B cell (primary cell): ENCODE measurements at regions of chr18 and their contacts with region 1.

Region 1: DNA sequence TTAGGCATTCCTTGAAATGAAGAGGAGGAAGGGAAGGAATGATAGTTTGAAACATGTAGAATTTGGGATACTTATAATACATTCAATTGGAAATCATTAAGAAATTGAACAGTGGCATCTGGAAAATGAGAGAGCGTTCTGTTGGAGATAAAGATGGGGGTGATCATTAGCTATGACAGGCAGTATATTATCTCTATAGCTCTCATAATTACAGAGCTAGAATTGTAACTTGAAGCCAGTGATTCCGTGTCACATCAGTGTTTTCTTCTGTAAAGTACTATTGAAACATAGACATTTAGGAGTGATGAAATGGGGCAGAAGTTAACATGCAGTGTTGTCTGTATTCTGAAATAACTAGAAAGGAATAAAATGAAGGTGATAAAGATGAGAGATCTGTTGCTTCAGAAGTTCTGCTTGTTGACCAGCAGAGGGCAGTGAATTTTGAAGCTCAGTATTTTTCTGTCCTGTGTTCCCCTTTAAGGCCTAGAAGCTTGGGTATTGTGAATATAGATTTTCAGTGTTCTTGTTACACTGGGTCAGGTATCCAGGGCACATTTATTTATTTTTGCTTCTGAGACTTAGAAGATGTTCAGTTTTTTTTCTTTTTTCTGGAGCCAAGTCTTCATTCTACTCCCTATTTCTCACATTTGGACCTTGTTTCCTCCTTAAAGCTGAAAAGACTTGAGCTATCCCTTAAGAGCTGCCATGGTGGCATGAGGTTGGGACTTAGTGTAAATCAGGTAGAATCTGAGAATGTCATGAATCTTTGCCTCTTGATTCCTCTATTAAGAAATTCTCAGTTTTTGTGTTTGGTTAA is 157.4 kb downstream of the TAF4B start:
- DNase-seq: peak; percentile 50
- ATAC-seq: no peak
- H3K4me3 ChIP-seq: no peak overlapping the region
- H3K4me3 Mint-ChIP-seq: no peak overlapping the region
- H3K27ac ChIP-seq: no peak overlapping the region
- H3K27ac Mint-ChIP-seq: no peak overlapping the region
- H3K4me1 ChIP-seq: no peaks in the 10 kb centered on the region
- H3K4me1 Mint-ChIP-seq: no peaks in the 10 kb centered on the region
- H3K27me3 ChIP-seq: no peaks in the 10 kb centered on the region
- H3K27me3 Mint-ChIP-seq: no peaks in the 10 kb centered on the region
- CTCF ChIP-seq: peak; percentile 88

Region 2: GRCh38 chr18:26185267-26185666 is 198.4 kb before region 1 on chr18:
- CTCF ChIA-PET with region 1: no interaction called
- POLR2A ChIA-PET with region 1: no interaction called
- intact Hi-C with region 1: no loop called
- DNase-seq: no peak
- ATAC-seq: no peak
- H3K4me3 ChIP-seq: no peak overlapping the region
- H3K4me3 Mint-ChIP-seq: no peak overlapping the region
- H3K27ac ChIP-seq: no peak overlapping the region
- H3K27ac Mint-ChIP-seq: no peak overlapping the region
- H3K4me1 ChIP-seq: peaks cover 12 to 18% of the 10 kb centered on the region in 2 donors
- H3K4me1 Mint-ChIP-seq: peaks cover 30% of the 10 kb centered on the region
- H3K27me3 ChIP-seq: no peaks in the 10 kb centered on the region
- H3K27me3 Mint-ChIP-seq: no peaks in the 10 kb centered on the region
- CTCF ChIP-seq: peak; percentile 29

Region 3: DNA sequence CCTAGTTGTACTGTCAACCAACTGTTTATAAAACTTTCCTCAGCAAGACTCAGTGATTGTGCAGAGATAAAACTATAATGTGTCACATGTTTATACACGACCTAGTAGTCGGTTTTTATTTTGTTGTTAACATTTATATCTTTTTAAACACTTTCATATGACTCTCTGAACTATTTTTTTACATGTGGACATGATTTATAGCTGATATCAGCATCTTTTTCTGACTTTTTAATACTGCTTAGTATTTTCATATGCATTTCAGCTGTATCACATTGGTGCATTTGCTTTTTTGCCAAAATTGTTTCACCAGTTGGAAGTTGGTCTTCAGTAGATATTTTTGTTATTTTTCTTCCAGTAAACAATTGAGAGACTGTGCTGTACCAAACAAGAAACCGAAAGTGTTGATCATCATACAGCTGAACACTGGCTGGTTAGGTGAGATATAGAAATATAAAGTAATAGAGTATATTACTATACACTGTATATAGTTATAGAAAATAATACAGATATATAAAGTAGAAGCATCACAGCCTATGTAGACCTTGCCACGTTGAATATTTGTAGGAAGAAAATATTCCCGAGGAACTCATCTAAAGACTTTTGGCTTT is 10.5 kb after region 1 on chr18:
- CTCF ChIA-PET with region 1: interaction called, 16 read pairs
- POLR2A ChIA-PET with region 1: no interaction called
- intact Hi-C with region 1: no loop called
- DNase-seq: no peak
- ATAC-seq: no peak
- H3K4me3 ChIP-seq: no peak overlapping the region
- H3K4me3 Mint-ChIP-seq: no peak overlapping the region
- H3K27ac ChIP-seq: no peak overlapping the region
- H3K27ac Mint-ChIP-seq: no peak overlapping the region
- H3K4me1 ChIP-seq: no peaks in the 10 kb centered on the region
- H3K4me1 Mint-ChIP-seq: no peaks in the 10 kb centered on the region
- H3K27me3 ChIP-seq: no peaks in the 10 kb centered on the region
- H3K27me3 Mint-ChIP-seq: no peaks in the 10 kb centered on the region
- CTCF ChIP-seq: no peak

Region 4: DNA sequence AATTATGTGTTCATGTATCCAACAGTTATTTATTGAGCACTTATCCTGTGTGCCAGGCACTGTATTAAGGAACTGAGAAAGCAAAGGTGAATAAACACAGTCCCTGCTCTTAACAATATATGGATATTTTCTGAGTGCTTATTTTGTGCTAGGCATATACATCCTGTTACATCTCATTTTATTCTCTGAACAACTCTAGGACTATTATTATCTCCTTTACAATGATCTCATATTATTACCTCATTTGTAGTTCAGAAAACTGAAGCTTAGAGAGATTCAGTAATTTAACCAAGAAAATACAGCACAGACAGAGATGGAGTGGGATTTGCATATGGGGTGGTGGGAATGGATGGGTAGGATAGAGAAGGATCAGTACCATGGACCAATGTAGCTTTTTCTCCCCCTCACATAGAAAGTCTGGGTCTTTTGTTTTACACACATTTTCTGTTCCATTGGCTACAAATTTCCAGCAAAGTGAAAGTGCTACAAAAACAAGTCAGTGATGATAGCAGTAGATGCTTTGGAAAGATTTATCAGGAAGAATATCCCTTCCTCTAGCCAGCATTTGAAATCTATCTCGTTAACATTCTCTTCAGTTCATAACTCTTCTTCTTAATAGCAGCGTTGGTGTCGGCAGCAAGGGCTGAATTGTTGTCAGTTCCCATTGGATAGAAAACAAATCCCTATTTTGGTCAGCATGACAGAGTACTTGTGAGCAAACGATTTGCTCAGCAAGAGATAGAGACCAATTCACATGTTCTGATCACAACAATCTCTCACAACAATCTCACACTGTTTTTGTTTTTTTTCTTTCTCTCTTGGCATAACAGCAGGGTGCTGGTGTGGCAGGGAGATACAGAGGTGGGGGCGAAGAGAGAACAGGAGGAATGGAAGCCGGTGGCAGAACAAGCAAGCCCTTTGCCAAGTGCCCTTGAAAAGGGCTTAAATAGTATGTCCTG is 266.9 kb after region 1 on chr18:
- CTCF ChIA-PET with region 1: interaction called, 15 read pairs
- POLR2A ChIA-PET with region 1: no interaction called
- intact Hi-C with region 1: no loop called
- DNase-seq: no peak
- ATAC-seq: no peak
- H3K4me3 ChIP-seq: no peak overlapping the region
- H3K4me3 Mint-ChIP-seq: no peak overlapping the region
- H3K27ac ChIP-seq: no peak overlapping the region
- H3K27ac Mint-ChIP-seq: no peak overlapping the region
- H3K4me1 ChIP-seq: peaks cover 0 to 3% of the 10 kb centered on the region in 2 donors
- H3K4me1 Mint-ChIP-seq: peaks cover 6% of the 10 kb centered on the region
- H3K27me3 ChIP-seq: peaks cover 0 to 22% (median 18%) of the 10 kb centered on the region in 4 experiments
- H3K27me3 Mint-ChIP-seq: peaks cover 57% of the 10 kb centered on the region
- CTCF ChIP-seq: no peak